HCT116 (cell line): ENCODE measurements at regions of chr3 and their contacts with region 1.

Region 1: DNA sequence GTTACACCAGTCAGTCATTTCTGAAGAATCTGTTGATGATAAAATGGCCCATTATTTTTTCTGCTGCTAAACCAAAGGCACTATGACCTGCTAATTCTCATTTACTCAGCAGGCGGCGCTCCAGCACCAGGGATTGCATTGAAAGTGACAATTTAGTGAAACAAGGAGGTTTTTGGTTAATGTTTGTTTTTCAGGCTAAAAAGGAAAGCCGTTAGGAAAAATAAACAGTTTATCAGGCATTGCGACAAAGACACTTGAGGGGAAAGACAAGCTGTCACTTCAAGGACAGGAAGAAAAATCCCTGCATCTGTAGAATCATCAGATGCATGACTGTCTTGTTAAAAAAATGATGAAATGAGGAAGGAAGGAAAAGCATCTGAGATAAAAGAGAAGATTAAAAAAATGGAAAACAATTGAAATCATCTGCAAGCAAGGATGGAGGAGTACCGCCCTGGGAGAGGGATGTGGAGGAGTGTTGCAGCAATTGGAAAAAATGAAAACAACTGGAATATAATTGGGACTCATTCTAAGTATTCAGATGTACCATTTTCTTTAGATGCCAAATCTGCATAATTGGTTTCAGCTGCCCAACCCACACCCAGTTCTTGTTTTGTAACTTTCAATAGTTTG is 54.0 kb downstream of the NR1D2 start:
- DNase-seq: peak; percentile 19
- ATAC-seq: peak; percentile 67
- H3K4me3 ChIP-seq: no peak overlapping the region
- H3K27ac ChIP-seq: no peak overlapping the region
- H3K4me1 ChIP-seq: no peaks in the 10 kb centered on the region
- H3K27me3 ChIP-seq: no peaks in the 10 kb centered on the region
- CTCF ChIP-seq: peak; percentile 83 to 97 (median 91)
- POLR2A ChIP-seq: no peak
- RAD21 ChIP-seq: peak; percentile 98

Region 2: DNA sequence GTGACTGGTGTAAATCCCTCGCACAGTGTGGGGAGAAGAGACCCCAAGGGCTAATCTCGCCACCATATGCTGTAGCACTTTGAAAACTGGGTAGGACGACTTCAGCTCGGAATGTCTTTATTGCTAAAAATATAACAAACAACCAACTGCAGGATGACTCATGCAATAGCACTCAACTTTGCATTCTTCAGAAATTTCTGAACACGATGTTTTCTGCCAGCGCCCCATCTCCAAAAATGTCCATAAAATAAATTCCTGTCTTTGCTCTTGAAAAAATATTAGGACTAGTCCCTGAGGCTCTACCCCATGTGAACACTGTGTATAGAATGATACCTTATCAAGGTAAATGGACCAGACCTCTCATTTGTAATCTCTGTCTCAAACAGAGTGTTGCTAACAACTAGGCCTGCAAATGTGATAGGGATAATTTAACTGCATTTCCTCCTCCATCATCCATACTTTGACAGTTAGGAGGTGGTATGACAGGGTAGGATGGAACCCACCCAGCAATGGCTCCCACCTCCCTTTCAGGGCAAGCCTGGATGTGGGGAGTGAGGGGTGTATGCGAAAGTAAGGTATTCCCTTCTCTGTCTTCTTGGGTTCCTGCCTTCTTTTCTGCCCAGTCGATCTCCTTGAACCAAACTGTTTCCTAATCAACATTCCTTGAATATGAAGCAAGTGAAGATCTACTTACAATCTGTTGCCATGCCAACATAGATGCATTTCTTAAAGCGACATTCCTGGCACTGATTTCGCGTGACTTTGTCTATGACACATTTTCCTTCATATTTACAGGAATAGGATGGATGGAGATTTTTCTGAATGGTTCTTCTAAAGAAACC is 147.1 kb after region 1 on chr3:
- CTCF ChIA-PET with region 1: no interaction called
- POLR2A ChIA-PET with region 1: no interaction called
- RAD21 ChIA-PET with region 1: no interaction called
- intact Hi-C with region 1: loop called (anchors 5 kb)
- DNase-seq: no peak
- ATAC-seq: peak; percentile 63
- H3K4me3 ChIP-seq: peak overlapping the region in 1 of 2 experiments; percentile 30; a peak in 2 of 4 replicates
- H3K27ac ChIP-seq: peak overlapping the region; percentile 18; the same call in 1 of the 2 replicates
- H3K4me1 ChIP-seq: peaks cover 12 to 20% of the 10 kb centered on the region in 2 experiments
- H3K27me3 ChIP-seq: no peaks in the 10 kb centered on the region
- CTCF ChIP-seq: no peak
- POLR2A ChIP-seq: no peak
- RAD21 ChIP-seq: no peak

Region 3: DNA sequence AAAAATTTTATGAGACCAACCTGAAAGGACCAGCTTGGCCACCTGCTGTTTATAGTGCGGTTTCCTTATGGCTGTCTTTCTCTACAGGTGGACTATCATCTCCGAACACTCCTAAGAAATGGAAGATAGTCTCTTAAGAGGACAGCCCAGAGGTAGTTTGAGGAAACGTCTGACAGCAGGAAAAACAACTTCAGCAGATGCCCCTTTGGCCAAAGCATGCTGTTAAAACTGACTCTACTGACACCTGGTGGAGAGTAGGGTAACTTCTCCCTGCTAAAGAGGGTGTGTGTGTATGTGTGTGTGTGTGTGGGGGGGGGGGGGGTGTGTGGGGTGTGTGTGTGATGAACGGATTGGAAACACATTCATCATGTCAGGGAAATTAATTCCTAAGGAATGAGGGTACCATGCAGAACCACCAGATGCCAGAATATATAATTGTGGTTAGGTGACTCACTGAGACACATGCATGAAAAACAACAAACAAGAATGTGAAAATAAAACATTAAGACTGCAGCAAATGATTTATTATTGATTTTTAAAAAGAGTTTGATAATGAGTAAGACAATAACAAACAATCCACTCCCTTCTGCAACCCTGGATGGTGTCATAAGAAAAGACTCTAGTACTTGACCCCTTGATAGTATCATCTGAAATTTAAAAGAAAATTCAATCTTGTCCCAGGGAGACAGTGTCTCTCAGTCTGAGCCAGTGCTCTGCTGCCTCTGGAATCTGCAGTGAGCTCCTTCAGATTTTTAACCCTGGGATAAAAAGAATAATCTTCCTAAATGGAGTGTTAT is 239.0 kb after region 1 on chr3:
- CTCF ChIA-PET with region 1: no interaction called
- POLR2A ChIA-PET with region 1: no interaction called
- RAD21 ChIA-PET with region 1: no interaction called
- intact Hi-C with region 1: loop called (anchors 1 kb)
- DNase-seq: peak; percentile 75
- ATAC-seq: peak; percentile 91
- H3K4me3 ChIP-seq: no peak overlapping the region
- H3K27ac ChIP-seq: no peak overlapping the region
- H3K4me1 ChIP-seq: peaks cover 7 to 17% of the 10 kb centered on the region in 2 experiments; a peak in 2 of 4 replicates
- H3K27me3 ChIP-seq: no peaks in the 10 kb centered on the region
- CTCF ChIP-seq: peak; percentile 76 to 93 (median 82)
- POLR2A ChIP-seq: no peak
- RAD21 ChIP-seq: peak; percentile 89

Region 4: DNA sequence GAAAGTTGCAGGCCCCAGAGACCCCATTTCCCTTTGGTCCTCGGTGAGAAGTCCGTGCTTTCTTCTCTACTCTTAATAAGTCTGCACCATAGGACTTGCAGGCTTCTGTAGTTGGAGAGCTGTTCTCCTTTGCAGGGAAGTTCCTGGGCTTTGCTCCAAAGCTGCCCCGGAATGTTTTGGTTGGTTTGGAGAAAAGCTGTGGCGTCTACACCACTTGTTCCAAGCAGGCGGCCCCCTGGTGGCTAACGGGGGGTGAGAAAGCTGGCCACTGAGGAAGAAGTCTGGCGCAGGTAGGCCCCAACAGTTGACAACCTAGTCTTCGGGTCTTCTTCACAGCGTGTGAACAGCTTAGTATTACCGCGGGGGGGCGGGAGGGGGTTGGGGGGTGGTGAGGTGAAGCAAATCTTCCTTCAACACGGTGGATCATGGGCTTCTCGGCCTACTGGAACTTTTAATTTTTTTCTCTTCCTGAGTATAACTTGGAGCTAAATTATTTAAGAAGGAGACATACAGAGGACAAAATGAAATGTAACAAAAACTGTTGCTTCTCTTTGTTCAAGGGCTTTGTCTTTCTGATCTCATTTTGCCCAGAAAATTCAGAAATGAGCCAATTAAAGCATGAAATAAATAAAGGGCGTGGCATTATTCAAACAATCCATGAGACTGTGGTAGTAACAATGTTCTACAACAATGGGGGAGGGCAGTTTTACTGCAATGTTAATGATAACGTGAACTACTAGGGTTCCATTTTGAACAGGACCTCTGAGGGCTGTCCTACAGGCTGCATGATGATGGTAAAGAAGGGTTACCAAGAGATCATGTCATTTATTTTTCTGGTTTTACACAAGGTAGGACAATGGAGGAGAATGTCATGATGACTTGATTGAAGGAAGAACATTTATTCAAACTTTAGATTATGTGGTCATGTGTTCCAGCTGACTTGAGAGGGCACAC is 497.7 kb after region 1 on chr3:
- CTCF ChIA-PET with region 1: interaction called, 3 read pairs
- POLR2A ChIA-PET with region 1: no interaction called
- RAD21 ChIA-PET with region 1: no interaction called
- intact Hi-C with region 1: loop called (anchors 1 kb)
- DNase-seq: peak; percentile 68
- ATAC-seq: peak; percentile 33
- H3K4me3 ChIP-seq: no peak overlapping the region
- H3K27ac ChIP-seq: no peak overlapping the region
- H3K4me1 ChIP-seq: peaks cover 8 to 26% of the 10 kb centered on the region in 2 experiments; a peak in 3 of 4 replicates
- H3K27me3 ChIP-seq: no peaks in the 10 kb centered on the region; the same call in 1 of the 2 replicates
- CTCF ChIP-seq: peak; percentile 55 to 83 (median 70); a peak in 5 of 6 replicates
- POLR2A ChIP-seq: no peak
- RAD21 ChIP-seq: peak; percentile 49

Region 5: DNA sequence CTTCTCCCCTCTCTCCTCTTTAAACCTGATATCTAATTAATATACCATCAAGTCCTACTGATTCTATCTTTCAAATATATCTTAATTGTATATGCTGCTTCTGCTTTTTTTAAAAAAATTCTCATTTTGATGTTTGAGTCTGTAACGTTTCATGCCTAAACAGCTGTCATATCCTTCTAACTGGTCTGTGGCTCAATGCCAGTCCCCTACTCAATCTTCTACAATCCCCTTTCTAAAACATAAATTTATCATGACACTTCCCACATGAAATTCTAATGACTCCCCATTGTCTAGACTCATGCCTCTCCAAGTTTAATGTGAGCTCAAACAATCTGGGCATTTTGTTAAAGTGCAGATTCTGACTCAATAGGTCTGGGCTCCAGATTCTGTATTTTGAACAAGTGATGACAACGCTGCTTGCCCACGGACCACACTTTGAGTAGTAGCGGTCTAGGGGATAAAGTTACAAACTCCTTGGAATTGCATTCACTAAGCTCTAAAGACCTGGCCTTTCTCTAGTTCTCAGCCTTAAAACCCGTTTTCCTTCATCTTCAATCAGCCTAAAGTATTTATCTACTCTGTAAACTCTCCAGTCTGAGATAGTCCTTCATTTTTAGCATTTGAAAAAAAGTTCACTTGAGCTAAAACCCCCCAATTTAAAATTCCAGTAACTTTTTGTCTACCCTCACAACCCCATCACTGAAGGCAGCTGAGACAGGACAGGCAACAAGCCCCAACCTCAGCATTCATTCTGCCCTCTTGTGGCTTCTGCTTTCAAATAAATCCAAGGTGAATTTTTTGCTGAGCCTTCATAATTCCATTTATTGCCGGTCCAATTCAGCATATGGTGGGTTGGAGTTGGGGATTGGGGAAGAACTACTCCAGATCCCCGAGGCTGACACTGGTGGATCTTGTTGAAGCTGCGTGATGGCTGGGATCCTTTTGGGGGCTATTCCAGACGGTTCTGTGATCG is 583.6 kb after region 1 on chr3:
- CTCF ChIA-PET with region 1: no interaction called
- POLR2A ChIA-PET with region 1: no interaction called
- RAD21 ChIA-PET with region 1: no interaction called
- intact Hi-C with region 1: loop called (anchors 5 kb)
- DNase-seq: no peak
- ATAC-seq: no peak; the same call in 1 of the 2 replicates
- H3K4me3 ChIP-seq: no peak overlapping the region
- H3K27ac ChIP-seq: no peak overlapping the region
- H3K4me1 ChIP-seq: no peaks in the 10 kb centered on the region
- H3K27me3 ChIP-seq: no peaks in the 10 kb centered on the region; the same call in 1 of the 2 replicates
- CTCF ChIP-seq: peak in 2 of 3 experiments; percentile 39 to 40; a peak in 3 of 6 replicates
- POLR2A ChIP-seq: no peak
- RAD21 ChIP-seq: peak; percentile 52

Region 6: DNA sequence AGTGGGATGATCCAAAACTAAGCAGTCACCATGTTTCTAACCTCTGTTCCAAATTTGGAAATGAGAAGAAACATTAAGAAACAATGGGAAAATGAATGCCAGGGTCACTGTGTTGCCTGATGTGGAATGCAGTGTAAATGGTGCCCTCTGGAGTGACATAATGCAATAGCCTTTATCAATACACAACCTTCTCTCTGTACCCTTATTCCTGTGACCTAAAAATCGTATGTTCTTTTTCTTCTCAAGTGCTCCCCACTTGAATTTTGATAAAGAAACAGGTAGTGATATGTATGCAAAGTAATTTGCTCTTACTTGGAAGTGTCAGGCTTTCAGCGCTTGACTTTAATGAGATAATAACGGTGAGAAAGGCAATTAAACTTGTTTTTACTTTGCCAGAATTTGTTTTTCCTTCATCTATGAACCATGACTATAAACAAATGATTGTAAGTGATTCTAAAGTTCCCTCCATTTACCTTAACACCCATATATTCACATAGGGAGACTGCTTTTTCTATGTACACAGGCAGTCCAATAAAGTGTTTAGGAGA is 641.3 kb after region 1 on chr3:
- CTCF ChIA-PET with region 1: no interaction called
- POLR2A ChIA-PET with region 1: no interaction called
- RAD21 ChIA-PET with region 1: no interaction called
- intact Hi-C with region 1: loop called (anchors 1 kb)
- DNase-seq: peak; percentile 27
- ATAC-seq: peak; percentile 94
- H3K4me3 ChIP-seq: no peak overlapping the region
- H3K27ac ChIP-seq: no peak overlapping the region
- H3K4me1 ChIP-seq: no peaks in the 10 kb centered on the region
- H3K27me3 ChIP-seq: no peaks in the 10 kb centered on the region
- CTCF ChIP-seq: peak; percentile 52 to 69 (median 59); a peak in 5 of 6 replicates
- POLR2A ChIP-seq: no peak
- RAD21 ChIP-seq: peak; percentile 79

Region 7: GRCh38 chr3:24680214-24680967 is 681.3 kb after region 1 on chr3:
- CTCF ChIA-PET with region 1: interaction called, 4 read pairs
- POLR2A ChIA-PET with region 1: no interaction called
- RAD21 ChIA-PET with region 1: no interaction called
- intact Hi-C with region 1: loop called (anchors 1 kb)
- DNase-seq: peak; percentile 42
- ATAC-seq: peak; percentile 96
- H3K4me3 ChIP-seq: no peak overlapping the region
- H3K27ac ChIP-seq: no peak overlapping the region
- H3K4me1 ChIP-seq: peaks cover 0 to 6% of the 10 kb centered on the region in 2 experiments; a peak in 1 of 4 replicates
- H3K27me3 ChIP-seq: no peaks in the 10 kb centered on the region
- CTCF ChIP-seq: peak; percentile 48 to 93 (median 91); a peak in 5 of 6 replicates
- POLR2A ChIP-seq: no peak
- RAD21 ChIP-seq: peak; percentile 59